Transverse colon (tissue), 4 donors: ENCODE measurements at regions of chr2 and their contacts with region 1.

Region 1: GRCh38 chr2:48590017-48590416 is 27.6 kb upstream of the GTF2A1L start:
- DNase-seq: no peak
- H3K4me3 ChIP-seq: no peak overlapping the region
- H3K27ac ChIP-seq: no peak overlapping the region
- H3K4me1 ChIP-seq: peaks cover 0 to 4% (median 2%) of the 10 kb centered on the region in 4 donors
- H3K27me3 ChIP-seq: no peaks in the 10 kb centered on the region
- CTCF ChIP-seq: no peak
- EP300 ChIP-seq: no peak
- POLR2A ChIP-seq: no peak

Region 2: DNA sequence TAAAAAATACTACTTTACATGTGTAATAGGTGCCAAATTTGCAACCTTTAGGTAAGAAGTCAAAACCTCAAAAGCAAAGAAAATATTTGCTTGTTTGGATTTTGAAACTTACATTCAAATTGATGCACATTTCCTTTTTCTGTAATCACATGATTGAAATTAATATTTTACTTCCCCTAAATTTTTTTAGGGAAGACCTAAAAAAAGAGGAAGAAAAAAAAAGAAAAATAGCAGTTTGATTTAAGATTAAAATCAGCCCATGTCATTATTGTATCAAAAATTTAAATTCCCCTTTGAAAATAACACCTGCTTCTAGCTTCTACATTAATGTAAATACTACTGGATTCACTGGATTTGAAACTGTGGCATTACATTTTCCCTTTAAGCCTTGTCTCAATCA is 128.3 kb before region 1 on chr2:
- in situ Hi-C with region 1: no loop called
- intact Hi-C with region 1: loop called (anchors 5 kb)
- DNase-seq: no peak
- H3K4me3 ChIP-seq: no peak overlapping the region
- H3K27ac ChIP-seq: no peak overlapping the region
- H3K4me1 ChIP-seq: no peaks in the 10 kb centered on the region
- H3K27me3 ChIP-seq: no peaks in the 10 kb centered on the region
- CTCF ChIP-seq: no peak
- EP300 ChIP-seq: no peak
- POLR2A ChIP-seq: no peak

Region 3: DNA sequence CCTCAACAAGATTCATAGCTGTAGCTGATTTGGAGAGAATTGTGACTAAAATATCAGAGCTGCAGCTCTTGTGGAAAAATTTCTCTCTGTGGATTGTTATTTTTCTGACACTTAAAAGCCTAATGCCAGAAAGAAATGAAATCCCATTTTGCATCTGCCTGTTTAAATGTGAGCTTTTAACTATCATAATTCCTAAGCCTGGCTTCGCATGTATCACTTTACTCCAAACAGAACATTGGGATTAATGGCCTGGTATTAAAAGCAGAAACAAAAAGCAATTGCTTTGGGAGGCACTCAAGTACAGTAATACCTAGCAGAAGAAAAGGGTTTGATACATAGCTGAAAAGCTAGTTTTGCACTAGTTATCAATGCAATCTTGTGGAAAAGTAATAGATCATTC is 728.5 kb after region 1 on chr2:
- in situ Hi-C with region 1: no loop called
- intact Hi-C with region 1: no loop called
- DNase-seq: no peak
- H3K4me3 ChIP-seq: no peak overlapping the region
- H3K27ac ChIP-seq: no peak overlapping the region
- H3K4me1 ChIP-seq: no peaks in the 10 kb centered on the region
- H3K27me3 ChIP-seq: no peaks in the 10 kb centered on the region
- CTCF ChIP-seq: no peak
- EP300 ChIP-seq: no peak
- POLR2A ChIP-seq: no peak